Caco-2 (cell line): ENCODE measurements at regions of chr13 and their contacts with region 1.

Region 1: GRCh38 chr13:46975173-46975572 is 78.3 kb upstream of the HTR2A start:
- DNase-seq: no peak
- H3K4me3 ChIP-seq: no peak overlapping the region
- H3K4me3 Mint-ChIP-seq: no peak overlapping the region
- H3K27ac Mint-ChIP-seq: no peak overlapping the region
- H3K4me1 ChIP-seq: no peaks in the 10 kb centered on the region
- H3K4me1 Mint-ChIP-seq: no peaks in the 10 kb centered on the region
- H3K27me3 ChIP-seq: 0 out of 2 replicates have a peak, but pooled peaks cover 1% of the 10 kb centered on the region
- H3K27me3 Mint-ChIP-seq: peaks cover 2% of the 10 kb centered on the region
- CTCF ChIP-seq: no peak

Region 2: GRCh38 chr13:46622630-46623256 is 352.4 kb before region 1 on chr13:
- CTCF ChIA-PET with region 1: no interaction called
- POLR2A ChIA-PET with region 1: no interaction called
- intact Hi-C with region 1: no loop called
- DNase-seq: no peak
- H3K4me3 ChIP-seq: no peak overlapping the region
- H3K4me3 Mint-ChIP-seq: no peak overlapping the region
- H3K27ac Mint-ChIP-seq: no peak overlapping the region
- H3K4me1 ChIP-seq: peaks cover 66% of the 10 kb centered on the region
- H3K4me1 Mint-ChIP-seq: peaks cover 56% of the 10 kb centered on the region
- H3K27me3 ChIP-seq: no peaks in the 10 kb centered on the region
- H3K27me3 Mint-ChIP-seq: no peaks in the 10 kb centered on the region
- CTCF ChIP-seq: no peak

Region 3: DNA sequence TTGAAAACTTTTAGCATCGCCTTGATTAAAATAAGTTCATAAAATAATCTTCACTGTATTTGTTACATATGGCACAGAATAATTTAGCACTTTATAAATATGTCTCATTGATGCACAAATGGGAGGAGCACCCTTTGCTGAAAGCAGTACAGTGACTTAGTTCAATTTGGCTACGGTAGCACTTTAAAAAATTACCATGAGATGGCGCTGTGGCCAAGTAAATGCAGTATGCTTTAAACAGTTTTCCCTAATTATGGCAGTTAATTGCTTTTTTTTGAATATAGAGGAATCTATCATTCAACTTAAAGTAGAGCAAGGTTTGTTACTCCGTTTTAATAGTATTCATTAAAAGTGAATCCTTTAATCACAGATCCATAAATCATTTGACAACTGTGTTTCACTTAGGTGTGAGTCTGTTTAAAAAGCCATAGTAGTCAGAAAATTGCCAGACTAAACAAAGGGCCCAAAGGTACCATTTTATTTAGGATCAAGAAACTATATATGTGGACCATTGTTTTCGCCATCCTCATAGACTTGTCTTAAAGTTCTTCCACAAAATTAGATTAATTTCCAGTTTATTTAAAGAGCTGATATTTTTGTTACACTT is 143.5 kb before region 1 on chr13:
- CTCF ChIA-PET with region 1: no interaction called
- POLR2A ChIA-PET with region 1: no interaction called
- intact Hi-C with region 1: loop called (anchors 2 kb)
- DNase-seq: peak in 1 of 2 experiments; percentile 56
- H3K4me3 ChIP-seq: no peak overlapping the region
- H3K4me3 Mint-ChIP-seq: no peak overlapping the region
- H3K27ac Mint-ChIP-seq: no peak overlapping the region
- H3K4me1 ChIP-seq: no peaks in the 10 kb centered on the region
- H3K4me1 Mint-ChIP-seq: no peaks in the 10 kb centered on the region
- H3K27me3 ChIP-seq: no peaks in the 10 kb centered on the region
- H3K27me3 Mint-ChIP-seq: peaks cover 14% of the 10 kb centered on the region
- CTCF ChIP-seq: peak; percentile 77 to 86

Region 4: DNA sequence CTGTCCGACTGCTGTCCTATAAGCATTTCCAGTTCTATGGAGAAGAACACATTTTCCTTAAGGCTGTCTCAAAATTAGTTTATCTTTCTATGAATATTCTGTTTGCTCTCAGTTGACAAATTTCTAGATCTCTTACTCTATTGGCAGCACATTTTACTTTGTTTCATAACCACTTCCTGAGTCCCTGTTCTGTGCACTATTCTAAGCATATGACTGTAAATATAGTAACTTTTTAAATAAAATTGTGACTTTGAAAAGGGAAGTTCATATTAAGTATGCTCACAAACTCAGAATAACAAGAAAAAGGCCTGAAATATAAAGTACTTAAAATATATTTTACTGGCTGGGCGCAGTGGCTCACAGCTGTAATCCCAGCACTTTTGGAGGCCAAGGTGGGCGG is 21.8 kb before region 1 on chr13:
- CTCF ChIA-PET with region 1: no interaction called
- POLR2A ChIA-PET with region 1: no interaction called
- intact Hi-C with region 1: no loop called
- DNase-seq: no peak
- H3K4me3 ChIP-seq: no peak overlapping the region
- H3K4me3 Mint-ChIP-seq: no peak overlapping the region
- H3K27ac Mint-ChIP-seq: no peak overlapping the region
- H3K4me1 ChIP-seq: no peaks in the 10 kb centered on the region
- H3K4me1 Mint-ChIP-seq: no peaks in the 10 kb centered on the region
- H3K27me3 ChIP-seq: no peaks in the 10 kb centered on the region
- H3K27me3 Mint-ChIP-seq: peaks cover 9% of the 10 kb centered on the region
- CTCF ChIP-seq: no peak

Region 5: GRCh38 chr13:47036291-47037008 is 61.3 kb after region 1 on chr13:
- CTCF ChIA-PET with region 1: no interaction called
- POLR2A ChIA-PET with region 1: no interaction called
- intact Hi-C with region 1: no loop called
- DNase-seq: no peak
- H3K4me3 ChIP-seq: no peak overlapping the region
- H3K4me3 Mint-ChIP-seq: no peak overlapping the region
- H3K27ac Mint-ChIP-seq: no peak overlapping the region
- H3K4me1 ChIP-seq: peaks cover 10% of the 10 kb centered on the region; the same call in 1 of the 2 replicates
- H3K4me1 Mint-ChIP-seq: peaks cover 6% of the 10 kb centered on the region
- H3K27me3 ChIP-seq: no peaks in the 10 kb centered on the region; the same call in 1 of the 2 replicates
- H3K27me3 Mint-ChIP-seq: peaks cover 23% of the 10 kb centered on the region
- CTCF ChIP-seq: no peak

Region 6: GRCh38 chr13:47334173-47334572 is 359.0 kb after region 1 on chr13:
- CTCF ChIA-PET with region 1: no interaction called
- POLR2A ChIA-PET with region 1: no interaction called
- intact Hi-C with region 1: no loop called
- DNase-seq: no peak
- H3K4me3 ChIP-seq: no peak overlapping the region
- H3K4me3 Mint-ChIP-seq: no peak overlapping the region
- H3K27ac Mint-ChIP-seq: no peak overlapping the region
- H3K4me1 ChIP-seq: no peaks in the 10 kb centered on the region
- H3K4me1 Mint-ChIP-seq: no peaks in the 10 kb centered on the region
- H3K27me3 ChIP-seq: no peaks in the 10 kb centered on the region
- H3K27me3 Mint-ChIP-seq: peaks cover 3% of the 10 kb centered on the region
- CTCF ChIP-seq: no peak

Region 7: GRCh38 chr13:47459512-47459911 is 484.3 kb after region 1 on chr13:
- CTCF ChIA-PET with region 1: interaction called, 3 read pairs
- POLR2A ChIA-PET with region 1: no interaction called
- intact Hi-C with region 1: loop called (anchors 1 kb)
- DNase-seq: no peak
- H3K4me3 ChIP-seq: no peak overlapping the region
- H3K4me3 Mint-ChIP-seq: no peak overlapping the region
- H3K27ac Mint-ChIP-seq: no peak overlapping the region
- H3K4me1 ChIP-seq: no peaks in the 10 kb centered on the region
- H3K4me1 Mint-ChIP-seq: no peaks in the 10 kb centered on the region
- H3K27me3 ChIP-seq: no peaks in the 10 kb centered on the region; the same call in 1 of the 2 replicates
- H3K27me3 Mint-ChIP-seq: peaks cover 2% of the 10 kb centered on the region
- CTCF ChIP-seq: peak in 1 of 2 experiments; percentile 13

Region 8: GRCh38 chr13:47598340-47598911 is 623.3 kb after region 1 on chr13:
- CTCF ChIA-PET with region 1: no interaction called
- POLR2A ChIA-PET with region 1: no interaction called
- intact Hi-C with region 1: loop called (anchors 1 kb)
- DNase-seq: no peak
- H3K4me3 ChIP-seq: no peak overlapping the region
- H3K4me3 Mint-ChIP-seq: no peak overlapping the region
- H3K27ac Mint-ChIP-seq: no peak overlapping the region
- H3K4me1 ChIP-seq: no peaks in the 10 kb centered on the region
- H3K4me1 Mint-ChIP-seq: no peaks in the 10 kb centered on the region
- H3K27me3 ChIP-seq: no peaks in the 10 kb centered on the region
- H3K27me3 Mint-ChIP-seq: no peaks in the 10 kb centered on the region
- CTCF ChIP-seq: peak in 1 of 2 experiments; percentile 8

Region 9: GRCh38 chr13:47774671-47774994 is 799.5 kb after region 1 on chr13:
- CTCF ChIA-PET with region 1: no interaction called
- POLR2A ChIA-PET with region 1: no interaction called
- intact Hi-C with region 1: loop called (anchors 1 kb)
- DNase-seq: no peak
- H3K4me3 ChIP-seq: no peak overlapping the region
- H3K4me3 Mint-ChIP-seq: no peak overlapping the region
- H3K27ac Mint-ChIP-seq: no peak overlapping the region
- H3K4me1 ChIP-seq: no peaks in the 10 kb centered on the region
- H3K4me1 Mint-ChIP-seq: no peaks in the 10 kb centered on the region
- H3K27me3 ChIP-seq: peaks cover 1% of the 10 kb centered on the region; the same call in 1 of the 2 replicates
- H3K27me3 Mint-ChIP-seq: peaks cover 3% of the 10 kb centered on the region
- CTCF ChIP-seq: no peak